ENCODE measurements at regions of chr2 and their contacts with region 1.

Region 1: DNA sequence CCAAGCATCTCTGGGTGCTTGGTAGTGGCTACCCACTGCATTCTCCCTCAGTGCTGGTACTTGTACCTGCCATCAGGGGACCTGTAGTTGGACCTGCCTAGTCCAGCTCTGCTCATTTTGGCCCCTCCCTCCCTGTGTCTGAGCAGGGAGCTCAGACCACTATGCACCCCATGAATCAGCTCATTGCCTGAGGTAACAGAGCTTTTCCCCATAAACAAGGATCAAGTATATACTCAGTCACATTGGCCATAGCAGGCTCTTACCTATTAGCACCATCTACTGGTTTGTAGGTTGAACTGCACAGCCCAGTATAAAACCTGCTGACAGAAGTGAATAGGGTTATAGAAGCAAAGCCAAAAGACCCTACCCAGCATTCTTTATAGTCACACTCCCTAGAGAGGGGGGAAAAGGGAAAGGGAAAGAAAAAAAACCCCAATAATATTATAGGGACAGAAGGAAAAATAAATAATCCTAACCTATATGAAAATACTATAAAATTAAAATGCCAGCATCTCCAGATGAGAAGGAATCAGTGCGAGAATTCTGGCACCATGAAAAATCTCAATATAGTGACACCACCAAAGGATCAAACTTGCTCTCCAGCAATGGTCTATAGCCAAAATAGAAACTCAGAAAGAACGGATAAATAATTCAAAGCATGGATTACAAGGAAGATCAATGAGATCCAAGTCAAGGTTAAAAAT is 6.9 kb upstream of the FLACC1 start:
- DNase-seq: no peak

Region 2: DNA sequence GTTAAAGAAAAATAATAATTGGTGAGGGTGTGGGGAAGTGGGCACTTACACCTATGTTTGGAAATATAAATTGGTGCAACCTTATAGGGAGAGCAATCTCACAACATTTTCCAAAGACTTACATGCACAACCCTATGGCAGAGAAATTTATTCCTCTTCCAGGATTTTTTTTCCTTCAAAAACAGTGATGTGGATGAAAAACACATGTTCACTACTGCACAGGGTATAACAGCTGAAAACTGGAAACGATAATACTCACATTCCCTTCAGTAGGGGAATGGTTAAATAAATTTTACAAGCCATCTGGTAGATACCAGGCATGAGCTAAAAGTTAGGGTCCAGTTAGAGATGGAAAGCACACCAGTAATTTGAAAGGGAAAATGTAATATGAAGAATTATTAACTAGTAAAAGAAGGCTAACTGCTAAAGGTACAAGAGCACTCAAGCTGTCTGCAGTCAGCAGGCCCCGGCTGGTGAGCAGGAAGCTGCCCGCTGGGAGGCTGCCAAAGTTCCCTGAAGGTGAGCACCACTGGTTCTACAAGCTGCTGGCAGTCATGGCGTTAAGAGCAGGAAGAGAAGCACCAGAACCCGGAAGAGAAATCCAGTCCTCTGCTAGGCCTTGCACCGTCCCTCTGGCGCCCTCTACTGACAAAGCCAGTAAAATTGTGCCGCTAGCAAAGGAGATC is 132.1 kb before region 1 on chr2:
- intact Hi-C with region 1: loop called in 1 of 2 experiments (anchors 10 kb)
- DNase-seq: peak; percentile 92

Region 3: DNA sequence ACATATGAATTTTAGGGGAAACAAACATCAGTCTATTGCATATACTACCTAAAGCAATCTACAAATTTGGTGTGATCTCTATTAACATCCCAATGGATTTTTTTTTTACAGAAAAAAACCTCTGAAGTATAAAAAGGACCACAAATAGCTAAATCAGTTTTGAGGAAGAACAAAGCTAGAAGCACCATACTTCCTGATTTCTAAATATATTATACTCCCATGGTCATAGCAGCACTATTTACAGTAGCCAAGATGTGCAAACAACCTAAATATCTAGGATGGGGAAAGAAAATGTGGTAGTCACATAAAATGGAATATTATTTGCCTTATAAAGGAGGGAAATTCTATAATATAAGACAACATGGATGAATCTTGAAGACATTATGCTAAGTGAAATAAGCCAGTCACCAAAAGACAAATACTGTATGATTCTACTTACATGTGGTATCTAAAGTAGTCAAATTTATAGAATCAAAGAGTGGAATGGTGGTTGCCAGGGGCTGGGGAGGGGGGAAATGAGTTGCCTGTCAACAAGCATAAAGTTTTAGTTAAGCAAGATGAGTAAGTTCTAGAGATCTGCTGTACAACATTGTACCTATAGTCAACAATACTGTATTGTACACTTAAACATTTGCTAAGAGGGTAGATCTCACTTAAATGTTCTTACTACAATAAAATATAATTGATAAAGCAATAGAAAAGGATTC is 121.3 kb before region 1 on chr2:
- intact Hi-C with region 1: loop called (anchors 10 kb)
- DNase-seq: no peak

Region 4: DNA sequence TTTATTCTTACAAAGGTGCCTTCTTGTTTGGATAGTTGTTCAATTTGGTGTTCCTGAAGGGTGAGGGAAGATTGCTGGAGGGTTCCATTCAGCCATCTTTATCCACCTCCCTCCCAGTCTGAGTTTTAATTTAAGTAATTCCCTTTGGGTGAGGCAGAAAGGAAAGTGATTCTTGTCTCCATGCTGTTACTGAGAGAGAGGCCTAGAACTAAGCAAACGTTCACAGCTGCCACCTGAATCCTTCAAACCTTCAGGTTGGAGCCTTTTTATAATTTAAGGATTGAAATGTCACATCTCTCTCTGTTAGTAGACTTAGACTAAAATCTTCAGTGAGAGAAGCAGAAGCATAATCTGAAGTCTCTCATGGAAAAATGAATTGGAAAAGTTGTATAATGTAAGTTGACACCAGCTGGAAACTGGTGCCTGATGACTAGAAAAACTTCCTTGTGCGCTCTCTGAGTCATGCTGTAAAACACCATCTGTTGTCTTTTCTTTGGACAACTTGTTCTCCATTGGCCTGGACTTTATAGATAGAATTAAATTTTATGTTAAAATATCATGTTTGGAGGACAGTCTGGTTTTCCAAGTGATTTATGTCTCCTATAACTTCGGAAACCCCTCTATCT is 102.2 kb after region 1 on chr2:
- intact Hi-C with region 1: no loop called
- DNase-seq: no peak

Region 5: GRCh38 chr2:202249521-202249850 is 885.5 kb after region 1 on chr2:
- intact Hi-C with region 1: loop called in 1 of 2 experiments (anchors 5 kb)
- DNase-seq: no peak

Measured in posterior vena cava (tissue), 2 donors.